HepG2 (cell line): ENCODE measurements at regions of chr6 and their contacts with region 1.

Region 1: DNA sequence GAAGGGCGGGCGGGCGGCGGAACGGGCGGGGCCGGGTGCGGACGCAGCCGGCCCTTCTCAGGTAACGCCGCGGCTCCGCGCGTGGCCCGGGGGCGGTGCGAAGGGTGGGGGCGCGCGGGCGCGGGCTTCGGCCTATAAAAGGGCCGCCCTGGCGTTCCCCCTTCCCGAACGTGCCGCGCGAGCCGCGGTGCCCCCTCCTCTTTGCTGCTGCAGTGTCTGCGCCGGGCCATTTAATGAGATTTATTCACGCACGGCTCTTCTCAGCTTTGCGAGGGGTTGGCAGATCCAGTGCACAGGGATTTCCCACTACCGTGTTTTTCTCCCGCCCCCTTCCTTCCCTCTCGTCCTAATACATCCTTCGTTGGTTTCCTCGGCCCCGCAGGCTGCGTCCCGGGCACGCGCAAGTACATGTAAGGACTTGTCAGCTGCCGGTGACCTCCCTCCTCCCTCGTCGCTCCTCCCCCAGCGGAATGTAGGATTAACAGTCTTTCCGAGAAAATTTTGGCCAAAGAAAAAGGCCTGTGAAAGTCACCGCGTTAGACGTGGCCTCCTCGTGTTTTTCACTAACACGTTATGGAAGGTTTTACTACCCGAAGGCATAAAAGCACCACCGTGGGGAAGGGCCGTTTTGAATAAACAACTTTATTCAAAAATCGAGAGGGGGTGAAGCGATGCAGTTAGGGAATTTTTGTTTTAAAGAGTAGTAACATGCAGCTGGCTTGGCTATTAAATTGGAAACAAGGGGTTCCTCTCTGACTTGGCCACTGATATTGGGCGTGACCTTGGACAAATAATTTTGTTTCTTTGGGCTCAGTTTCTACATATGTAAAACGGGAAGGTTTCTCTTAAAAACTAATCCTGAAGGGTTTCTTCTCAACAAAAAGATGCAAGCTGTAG is 966 bp upstream of the REV3L start:
- DNase-seq: peak; percentile 94
- ATAC-seq: peak; percentile 82
- H3K4me3 ChIP-seq: peak overlapping the region; percentile 92 to 95 (median 94)
- H3K27ac ChIP-seq: peak overlapping the region; percentile 98
- H3K4me1 ChIP-seq: peaks cover 39% of the 10 kb centered on the region
- H3K27me3 ChIP-seq: peaks cover 0 to 3% of the 10 kb centered on the region in 2 experiments; a peak in 1 of 5 replicates
- CTCF ChIP-seq: peak; percentile 27; the same call in 1 of the 2 replicates
- EP300 ChIP-seq: no peak
- POLR2A ChIP-seq: peak; percentile 91 to 99
- RAD21 ChIP-seq: no peak

Region 2: DNA sequence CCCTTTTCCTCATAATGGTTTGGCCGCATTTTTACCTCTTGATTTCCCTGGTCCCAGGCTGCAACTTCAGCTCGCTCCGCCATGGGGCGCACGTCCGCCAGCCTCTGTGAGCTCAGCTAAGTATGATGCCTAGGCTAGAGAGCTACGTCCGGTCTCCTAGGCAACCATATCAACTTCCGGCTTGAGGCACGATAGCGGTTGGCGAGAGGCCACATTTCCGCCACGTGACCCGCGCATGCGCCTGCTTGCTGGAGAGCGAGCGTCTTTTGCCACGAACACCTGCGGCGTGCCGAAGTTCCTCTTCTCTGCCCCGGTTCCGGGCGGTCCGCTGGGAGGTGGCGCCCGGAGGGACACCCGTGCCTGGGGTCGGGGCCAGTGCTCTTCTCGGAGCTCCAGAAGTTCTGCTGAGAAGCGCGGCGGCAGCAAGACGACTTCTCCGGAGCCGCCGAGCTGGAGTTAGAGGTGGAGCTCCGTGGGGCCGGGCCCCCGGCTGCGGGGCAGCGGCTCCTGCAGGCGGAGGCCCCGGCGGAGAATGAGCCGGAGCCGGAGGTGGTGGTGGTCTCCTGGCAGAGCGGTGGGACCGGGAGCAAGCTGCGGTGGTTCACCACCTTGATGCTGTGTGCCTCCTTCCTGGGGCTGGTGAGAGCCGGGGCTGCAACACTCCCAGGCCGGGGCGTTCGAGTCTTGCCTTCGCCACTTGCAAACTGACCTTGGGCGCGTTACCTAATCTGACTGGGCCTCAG is 224.7 kb before region 1 on chr6:
- CTCF ChIA-PET with region 1: no interaction called
- POLR2A ChIA-PET with region 1: interaction called, 20 read pairs
- in situ Hi-C with region 1: no loop called
- intact Hi-C with region 1: no loop called
- DNase-seq: peak; percentile 98
- ATAC-seq: peak; percentile 95
- H3K4me3 ChIP-seq: peak overlapping the region; percentile 71 to 89 (median 86)
- H3K27ac ChIP-seq: peak overlapping the region; percentile 92
- H3K4me1 ChIP-seq: peaks cover 45% of the 10 kb centered on the region
- H3K27me3 ChIP-seq: no peaks in the 10 kb centered on the region
- CTCF ChIP-seq: peak; percentile 98
- EP300 ChIP-seq: peak in 1 of 2 experiments; percentile 33; a peak in 1 of 4 replicates
- POLR2A ChIP-seq: peak; percentile 69 to 91
- RAD21 ChIP-seq: peak; percentile 84

Region 3: GRCh38 chr6:111573131-111573883 is 89.3 kb after region 1 on chr6:
- CTCF ChIA-PET with region 1: no interaction called
- POLR2A ChIA-PET with region 1: interaction called, 16 read pairs
- in situ Hi-C with region 1: no loop called
- intact Hi-C with region 1: loop called (anchors 1 kb)
- DNase-seq: no peak
- ATAC-seq: no peak
- H3K4me3 ChIP-seq: no peak overlapping the region
- H3K27ac ChIP-seq: peak overlapping the region; percentile 74
- H3K4me1 ChIP-seq: peaks cover 26% of the 10 kb centered on the region
- H3K27me3 ChIP-seq: no peaks in the 10 kb centered on the region
- CTCF ChIP-seq: no peak
- EP300 ChIP-seq: no peak
- POLR2A ChIP-seq: no peak
- RAD21 ChIP-seq: no peak

Region 4: GRCh38 chr6:111605100-111605751 is 121.2 kb after region 1 on chr6:
- CTCF ChIA-PET with region 1: no interaction called
- POLR2A ChIA-PET with region 1: interaction called, 42 read pairs
- in situ Hi-C with region 1: no loop called
- intact Hi-C with region 1: loop called (anchors 5 kb)
- DNase-seq: no peak
- ATAC-seq: peak; percentile 45
- H3K4me3 ChIP-seq: peak overlapping the region; percentile 72 to 93 (median 82)
- H3K27ac ChIP-seq: peak overlapping the region; percentile 66
- H3K4me1 ChIP-seq: peaks cover 78% of the 10 kb centered on the region
- H3K27me3 ChIP-seq: no peaks in the 10 kb centered on the region; a peak in 1 of 5 replicates
- CTCF ChIP-seq: no peak
- EP300 ChIP-seq: no peak
- POLR2A ChIP-seq: no peak
- RAD21 ChIP-seq: no peak

Region 5: GRCh38 chr6:111642463-111643158 is 158.6 kb after region 1 on chr6:
- CTCF ChIA-PET with region 1: no interaction called
- POLR2A ChIA-PET with region 1: interaction called, 6 read pairs
- in situ Hi-C with region 1: no loop called
- intact Hi-C with region 1: loop called (anchors 1 kb)
- DNase-seq: peak; percentile 80
- ATAC-seq: peak; percentile 89
- H3K4me3 ChIP-seq: 0 out of 6 replicates have a peak overlapping the region, but pooled peaks of 1 of the 3 experiments have one; percentile 4
- H3K27ac ChIP-seq: no peak overlapping the region
- H3K4me1 ChIP-seq: peaks cover 20% of the 10 kb centered on the region
- H3K27me3 ChIP-seq: no peaks in the 10 kb centered on the region
- CTCF ChIP-seq: peak; percentile 95
- EP300 ChIP-seq: no peak
- POLR2A ChIP-seq: no peak
- RAD21 ChIP-seq: peak; percentile 89

Region 6: DNA sequence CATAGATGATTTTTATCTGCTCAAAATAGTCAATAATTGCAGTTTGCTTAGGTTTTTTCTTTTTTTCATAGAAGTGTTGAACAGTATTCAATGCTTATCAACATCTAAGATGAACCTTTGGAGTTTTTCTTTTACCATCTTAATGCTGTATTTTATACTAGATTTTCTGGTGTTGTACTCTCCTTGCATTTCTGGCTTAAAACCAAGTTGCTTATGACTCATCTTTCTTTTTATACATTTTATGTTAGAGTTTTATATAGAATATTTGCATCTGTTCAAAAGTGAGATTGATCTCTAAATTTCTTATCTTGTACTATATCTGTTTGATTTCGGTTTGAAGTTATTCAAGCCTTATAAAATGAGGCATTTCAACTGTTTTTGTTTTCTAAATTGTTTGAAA is 1095.6 kb after region 1 on chr6:
- CTCF ChIA-PET with region 1: no interaction called
- POLR2A ChIA-PET with region 1: no interaction called
- in situ Hi-C with region 1: no loop called
- intact Hi-C with region 1: no loop called
- DNase-seq: no peak
- ATAC-seq: no peak
- H3K4me3 ChIP-seq: no peak overlapping the region
- H3K27ac ChIP-seq: no peak overlapping the region
- H3K4me1 ChIP-seq: no peaks in the 10 kb centered on the region
- H3K27me3 ChIP-seq: no peaks in the 10 kb centered on the region
- CTCF ChIP-seq: no peak
- EP300 ChIP-seq: no peak
- POLR2A ChIP-seq: no peak
- RAD21 ChIP-seq: no peak